AG04449 (cell line): ENCODE measurements at regions of chr17 and their contacts with region 1.

Region 1: GRCh38 chr17:14926526-14927122 is 338.5 kb downstream of the PMP22 start:
- DNase-seq: no peak
- H3K4me3 ChIP-seq: no peak overlapping the region
- CTCF ChIP-seq: peak; percentile 62

Region 2: GRCh38 chr17:14300575-14301278 is 625.9 kb before region 1 on chr17 and contains the start of gene HS3ST3B1:
- CTCF ChIA-PET with region 1: interaction called, 26 read pairs
- POLR2A ChIA-PET with region 1: no interaction called
- DNase-seq: peak; percentile 99
- H3K4me3 ChIP-seq: peak within 1 kb of the TSS; percentile 98
- CTCF ChIP-seq: peak; percentile 23

Region 3: GRCh38 chr17:14351493-14351892 is 575.1 kb before region 1 on chr17:
- CTCF ChIA-PET with region 1: interaction called, 20 read pairs
- POLR2A ChIA-PET with region 1: no interaction called
- DNase-seq: no peak
- H3K4me3 ChIP-seq: no peak overlapping the region
- CTCF ChIP-seq: no peak

Region 4: GRCh38 chr17:14859542-14859941 is 67.1 kb before region 1 on chr17:
- CTCF ChIA-PET with region 1: no interaction called
- POLR2A ChIA-PET with region 1: no interaction called
- DNase-seq: peak; percentile 61
- H3K4me3 ChIP-seq: no peak overlapping the region
- CTCF ChIP-seq: no peak

Region 5: DNA sequence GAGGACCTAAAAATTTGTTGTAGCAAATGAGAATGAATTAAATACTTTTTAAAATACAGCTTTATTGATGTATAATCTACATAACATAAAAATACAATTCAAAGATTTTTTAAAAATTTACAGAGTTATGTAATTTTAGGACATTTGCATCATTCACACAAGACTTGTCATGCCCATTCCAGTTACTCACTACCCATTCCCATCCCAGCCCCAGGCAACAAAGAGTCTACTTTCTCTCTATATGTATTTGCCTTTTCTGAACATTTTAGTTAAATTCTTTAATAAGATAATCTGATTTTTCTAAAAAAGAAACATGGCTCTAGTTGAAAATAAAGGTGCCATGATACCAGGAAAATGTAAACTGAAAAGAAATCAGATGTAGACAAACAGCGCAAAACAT is 15.7 kb before region 1 on chr17:
- CTCF ChIA-PET with region 1: interaction called, 13 read pairs
- POLR2A ChIA-PET with region 1: no interaction called
- DNase-seq: no peak
- H3K4me3 ChIP-seq: no peak overlapping the region
- CTCF ChIP-seq: no peak

Region 6: GRCh38 chr17:14950216-14950615 is 23.6 kb after region 1 on chr17:
- CTCF ChIA-PET with region 1: interaction called, 10 read pairs
- POLR2A ChIA-PET with region 1: no interaction called
- DNase-seq: peak; percentile 65
- H3K4me3 ChIP-seq: no peak overlapping the region
- CTCF ChIP-seq: no peak

Region 7: DNA sequence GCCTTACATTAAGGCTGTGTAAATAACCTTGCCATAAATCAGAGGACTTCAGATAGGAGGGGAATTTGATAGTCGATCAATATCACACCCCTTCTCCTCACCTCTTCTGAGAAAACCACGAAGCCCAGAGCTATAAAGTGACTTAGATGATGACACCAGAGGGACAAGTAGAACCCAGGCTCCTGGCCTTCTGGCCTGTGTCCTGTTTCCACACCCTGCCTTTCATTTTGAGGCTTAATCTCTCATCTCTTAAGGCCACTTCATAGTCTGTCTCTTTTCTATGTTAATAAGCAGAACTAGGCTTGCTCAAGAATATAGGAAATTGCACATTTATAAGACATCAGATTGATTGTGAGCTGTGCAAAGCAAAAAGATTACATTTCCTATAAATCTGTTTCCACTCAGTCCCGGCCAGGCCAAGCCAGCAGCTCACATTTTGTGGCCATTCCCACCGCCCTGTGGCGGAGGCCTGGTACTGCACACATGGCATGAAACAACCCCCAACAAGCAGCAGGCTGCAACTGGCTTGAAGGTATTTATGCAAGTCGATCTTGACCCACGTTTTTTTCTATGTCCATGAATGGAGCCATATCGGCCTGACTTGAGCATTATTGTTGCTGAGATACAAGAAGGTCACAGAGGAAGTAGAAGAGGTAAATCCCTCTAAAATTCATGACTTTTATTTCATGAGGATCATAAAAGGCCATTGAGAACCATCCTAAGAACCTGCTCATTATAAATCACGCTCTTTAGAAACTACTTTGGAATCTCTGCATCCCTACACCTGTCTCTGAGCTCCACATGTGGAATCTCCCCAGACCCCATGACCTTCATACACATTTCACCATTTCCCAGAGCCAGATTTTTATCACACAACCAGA is 244.8 kb after region 1 on chr17:
- CTCF ChIA-PET with region 1: interaction called, 21 read pairs
- POLR2A ChIA-PET with region 1: no interaction called
- DNase-seq: no peak
- H3K4me3 ChIP-seq: no peak overlapping the region
- CTCF ChIP-seq: peak; percentile 98